A673 (cell line): ENCODE measurements at regions of chr16 and their contacts with region 1.

Region 1: GRCh38 chr16:23863511-23864422 is 28.0 kb downstream of the PRKCB start:
- DNase-seq: no peak
- H3K4me3 ChIP-seq: peak overlapping the region; percentile 19
- H3K27ac ChIP-seq: peak overlapping the region; percentile 77
- H3K4me1 ChIP-seq: peaks cover 93% of the 10 kb centered on the region
- H3K27me3 ChIP-seq: no peaks in the 10 kb centered on the region
- CTCF ChIP-seq: no peak

Region 2: GRCh38 chr16:23729503-23730424 is 134.0 kb before region 1 on chr16:
- CTCF ChIA-PET with region 1: no interaction called
- POLR2A ChIA-PET with region 1: no interaction called
- intact Hi-C with region 1: loop called (anchors 10 kb)
- DNase-seq: peak; percentile 79
- H3K4me3 ChIP-seq: no peak overlapping the region
- H3K27ac ChIP-seq: peak overlapping the region; percentile 40
- H3K4me1 ChIP-seq: peaks cover 12% of the 10 kb centered on the region
- H3K27me3 ChIP-seq: no peaks in the 10 kb centered on the region
- CTCF ChIP-seq: no peak

Region 3: GRCh38 chr16:24318670-24319069 is 454.9 kb after region 1 on chr16:
- CTCF ChIA-PET with region 1: no interaction called
- POLR2A ChIA-PET with region 1: no interaction called
- intact Hi-C with region 1: loop called (anchors 10 kb)
- DNase-seq: peak; percentile 62
- H3K4me3 ChIP-seq: no peak overlapping the region
- H3K27ac ChIP-seq: peak overlapping the region; percentile 13
- H3K4me1 ChIP-seq: peaks cover 18% of the 10 kb centered on the region
- H3K27me3 ChIP-seq: no peaks in the 10 kb centered on the region
- CTCF ChIP-seq: peak; percentile 68